Panc1 (cell line): ENCODE measurements at regions of chr2 and their contacts with region 1.

Region 1: GRCh38 chr2:234308813-234309195 is 188.1 kb downstream of the ARL4C start:
- DNase-seq: no peak
- ATAC-seq: no peak
- H3K4me3 ChIP-seq: no peak overlapping the region
- H3K27ac ChIP-seq: peak overlapping the region; percentile 81
- H3K4me1 ChIP-seq: peaks cover 17% of the 10 kb centered on the region
- H3K27me3 ChIP-seq: no peaks in the 10 kb centered on the region
- CTCF ChIP-seq: no peak

Region 2: GRCh38 chr2:234288974-234289455 is 19.8 kb before region 1 on chr2:
- CTCF ChIA-PET with region 1: interaction called, 12 read pairs
- POLR2A ChIA-PET with region 1: no interaction called
- in situ Hi-C with region 1: no loop called
- intact Hi-C with region 1: no loop called
- DNase-seq: no peak
- ATAC-seq: peak; percentile 54; the same call in 1 of the 2 replicates
- H3K4me3 ChIP-seq: no peak overlapping the region
- H3K27ac ChIP-seq: peak overlapping the region; percentile 85
- H3K4me1 ChIP-seq: peaks cover 12% of the 10 kb centered on the region
- H3K27me3 ChIP-seq: no peaks in the 10 kb centered on the region
- CTCF ChIP-seq: peak; percentile 88

Region 3: DNA sequence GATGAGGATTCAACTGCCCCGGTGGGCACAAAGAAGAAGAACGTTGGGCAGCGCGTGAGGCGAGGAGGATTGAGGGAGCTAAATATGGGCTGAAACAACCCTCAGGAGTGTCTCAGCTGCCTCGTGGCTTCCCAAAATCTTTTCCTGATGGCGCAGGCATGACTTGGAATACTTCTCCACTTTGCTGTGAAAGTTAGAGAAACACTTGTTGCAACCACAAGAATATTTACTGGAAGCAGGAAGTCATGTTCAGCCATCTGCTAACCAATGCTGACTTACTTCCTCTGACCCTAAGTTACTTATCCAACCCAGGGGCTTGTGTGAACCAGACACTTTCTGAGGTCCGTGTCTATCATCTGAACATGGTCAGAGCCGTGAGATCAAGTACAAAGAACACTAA is 39.3 kb after region 1 on chr2:
- CTCF ChIA-PET with region 1: no interaction called
- POLR2A ChIA-PET with region 1: no interaction called
- in situ Hi-C with region 1: no loop called
- intact Hi-C with region 1: loop called (anchors 5 kb)
- DNase-seq: no peak
- ATAC-seq: no peak
- H3K4me3 ChIP-seq: no peak overlapping the region
- H3K27ac ChIP-seq: peak overlapping the region; percentile 62; the same call in 1 of the 2 replicates
- H3K4me1 ChIP-seq: no peaks in the 10 kb centered on the region; the same call in 1 of the 2 replicates
- H3K27me3 ChIP-seq: no peaks in the 10 kb centered on the region
- CTCF ChIP-seq: no peak